ENCODE measurements at regions of chr3 and their contacts with region 1.

Region 1: GRCh38 chr3:49093853-49094767 is at the start of gene QRICH1:
- DNase-seq: peak; percentile 99
- H3K4me3 Mint-ChIP-seq: peak within 1 kb of the TSS; percentile 89
- H3K27ac Mint-ChIP-seq: peak within 1 kb of the TSS; percentile 98
- H3K4me1 Mint-ChIP-seq: peaks cover 6% of the 10 kb centered on the region
- H3K27me3 Mint-ChIP-seq: no peaks in the 10 kb centered on the region
- CTCF ChIP-seq: peak; percentile 21
- total RNA-seq, gene QRICH1: 96.1 and 97.2 TPM in 2 replicates

Region 2: DNA sequence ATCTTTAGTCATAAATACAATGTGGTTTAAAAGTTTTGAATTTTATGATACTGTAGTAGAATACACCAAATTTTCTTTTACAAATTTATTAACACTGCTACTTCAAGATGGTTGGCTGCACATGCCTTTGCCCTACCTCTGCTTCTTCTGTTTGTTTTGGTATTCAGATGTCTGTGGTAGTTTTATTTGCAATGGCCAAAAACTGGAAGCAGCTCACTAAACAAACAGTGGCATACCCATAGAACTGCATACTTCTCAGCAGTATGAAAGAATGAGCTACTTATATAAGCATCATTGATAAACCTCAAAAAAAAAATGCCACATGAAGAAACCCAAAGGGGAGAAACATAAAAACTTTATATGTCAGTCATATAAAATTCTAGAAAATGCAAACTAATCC is 156.0 kb before region 1 on chr3:
- CTCF ChIA-PET with region 1: no interaction called
- POLR2A ChIA-PET with region 1: no interaction called
- intact Hi-C with region 1: no loop called
- DNase-seq: no peak
- H3K4me3 Mint-ChIP-seq: no peak overlapping the region
- H3K27ac Mint-ChIP-seq: no peak overlapping the region
- H3K4me1 Mint-ChIP-seq: peaks cover 4% of the 10 kb centered on the region
- H3K27me3 Mint-ChIP-seq: no peaks in the 10 kb centered on the region
- CTCF ChIP-seq: no peak

Region 3: GRCh38 chr3:49021813-49022687 is 72.1 kb before region 1 on chr3 and contains the start of gene NDUFAF3:
- CTCF ChIA-PET with region 1: interaction called, 3 read pairs
- POLR2A ChIA-PET with region 1: interaction called, 128 read pairs
- intact Hi-C with region 1: loop called (anchors 5 kb)
- DNase-seq: peak; percentile 93
- H3K4me3 Mint-ChIP-seq: peak within 1 kb of the TSS; percentile 89
- H3K27ac Mint-ChIP-seq: peak within 1 kb of the TSS; percentile 95
- H3K4me1 Mint-ChIP-seq: peaks cover 13% of the 10 kb centered on the region
- H3K27me3 Mint-ChIP-seq: no peaks in the 10 kb centered on the region
- CTCF ChIP-seq: peak; percentile 95
- total RNA-seq, gene NDUFAF3: 77.8 and 86.5 TPM in 2 replicates

Region 4: DNA sequence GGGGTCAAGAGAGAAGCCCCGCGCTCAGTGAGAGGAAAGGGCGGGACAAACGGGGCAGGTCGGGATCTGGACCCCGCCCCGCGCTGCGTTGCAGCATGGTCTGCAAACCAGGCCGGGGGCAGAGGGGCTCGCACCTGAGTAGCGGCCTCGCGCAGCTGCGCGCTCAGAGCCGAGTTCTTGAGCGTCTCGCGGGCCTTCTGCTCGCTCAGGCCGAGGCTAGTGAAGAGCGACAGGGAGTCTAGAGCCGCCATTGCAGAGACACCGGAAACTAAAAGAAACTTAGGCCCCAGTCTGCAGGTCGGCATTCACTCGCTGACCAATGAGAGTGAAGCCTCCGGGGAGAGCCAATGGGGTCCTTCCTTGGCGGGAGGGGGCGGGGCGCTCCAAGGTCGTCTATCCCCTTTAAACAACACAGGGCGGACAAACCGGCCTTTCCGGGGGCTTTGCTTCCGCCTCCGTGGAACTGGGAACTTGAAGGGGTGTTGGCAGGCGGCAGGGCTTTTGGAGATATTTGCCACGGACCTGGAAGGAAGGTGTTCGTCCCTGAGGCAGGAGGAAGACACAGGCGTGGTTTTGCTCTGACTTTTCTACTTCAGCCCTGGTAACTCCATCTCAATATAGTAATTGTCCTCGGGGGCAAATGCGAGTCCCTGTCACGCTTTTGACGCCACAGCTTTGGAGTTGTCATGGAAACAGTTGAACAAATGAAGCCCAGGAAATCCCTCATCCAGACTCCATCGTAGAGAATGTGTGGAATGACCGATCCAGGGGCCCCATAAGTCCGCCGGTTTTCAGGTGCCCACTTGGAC is 10.6 kb after region 1 on chr3 and contains the start of gene QARS1:
- CTCF ChIA-PET with region 1: interaction called, 5 read pairs
- POLR2A ChIA-PET with region 1: interaction called, 63 read pairs
- intact Hi-C with region 1: no loop called
- DNase-seq: peak; percentile 93
- H3K4me3 Mint-ChIP-seq: peak within 1 kb of the TSS; percentile 98
- H3K27ac Mint-ChIP-seq: peak within 1 kb of the TSS; percentile 90
- H3K4me1 Mint-ChIP-seq: peaks cover 12% of the 10 kb centered on the region
- H3K27me3 Mint-ChIP-seq: no peaks in the 10 kb centered on the region
- CTCF ChIP-seq: no peak
- total RNA-seq, gene QARS1: 114 and 149 TPM in 2 replicates

Region 5: DNA sequence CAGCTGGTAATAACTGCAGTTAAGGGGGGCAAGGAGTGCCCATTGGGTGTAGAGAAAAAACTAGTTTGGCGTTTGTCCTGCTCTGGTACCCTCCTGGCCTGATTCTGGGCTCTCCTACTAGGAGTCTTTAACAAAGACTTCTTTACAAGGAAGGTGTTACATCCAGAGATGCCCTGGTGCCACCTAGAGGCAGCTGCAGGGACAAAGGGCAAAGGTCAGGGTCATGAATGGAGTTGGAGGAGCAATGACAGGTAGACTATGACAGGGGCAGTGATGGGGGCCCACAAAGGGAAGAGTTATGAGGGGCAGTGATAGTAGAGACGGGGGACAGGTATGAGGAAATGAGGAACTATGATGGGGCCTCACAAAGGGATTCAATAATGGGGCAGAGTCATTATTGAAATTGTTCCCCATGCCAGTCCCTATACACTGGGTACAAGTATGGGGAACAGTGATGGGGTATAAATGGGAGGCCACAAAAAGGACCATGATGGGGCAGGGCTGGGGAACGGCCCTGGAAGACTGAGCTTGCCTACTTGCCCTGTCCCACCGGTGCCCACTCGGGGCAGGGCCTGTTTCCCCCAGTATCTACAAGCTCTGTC is 64.1 kb after region 1 on chr3:
- CTCF ChIA-PET with region 1: interaction called, 4 read pairs
- POLR2A ChIA-PET with region 1: interaction called, 3 read pairs
- intact Hi-C with region 1: loop called (anchors 1 kb)
- DNase-seq: peak; percentile 68
- H3K4me3 Mint-ChIP-seq: no peak overlapping the region
- H3K27ac Mint-ChIP-seq: no peak overlapping the region
- H3K4me1 Mint-ChIP-seq: no peaks in the 10 kb centered on the region
- H3K27me3 Mint-ChIP-seq: no peaks in the 10 kb centered on the region
- CTCF ChIP-seq: peak; percentile 53

Region 6: DNA sequence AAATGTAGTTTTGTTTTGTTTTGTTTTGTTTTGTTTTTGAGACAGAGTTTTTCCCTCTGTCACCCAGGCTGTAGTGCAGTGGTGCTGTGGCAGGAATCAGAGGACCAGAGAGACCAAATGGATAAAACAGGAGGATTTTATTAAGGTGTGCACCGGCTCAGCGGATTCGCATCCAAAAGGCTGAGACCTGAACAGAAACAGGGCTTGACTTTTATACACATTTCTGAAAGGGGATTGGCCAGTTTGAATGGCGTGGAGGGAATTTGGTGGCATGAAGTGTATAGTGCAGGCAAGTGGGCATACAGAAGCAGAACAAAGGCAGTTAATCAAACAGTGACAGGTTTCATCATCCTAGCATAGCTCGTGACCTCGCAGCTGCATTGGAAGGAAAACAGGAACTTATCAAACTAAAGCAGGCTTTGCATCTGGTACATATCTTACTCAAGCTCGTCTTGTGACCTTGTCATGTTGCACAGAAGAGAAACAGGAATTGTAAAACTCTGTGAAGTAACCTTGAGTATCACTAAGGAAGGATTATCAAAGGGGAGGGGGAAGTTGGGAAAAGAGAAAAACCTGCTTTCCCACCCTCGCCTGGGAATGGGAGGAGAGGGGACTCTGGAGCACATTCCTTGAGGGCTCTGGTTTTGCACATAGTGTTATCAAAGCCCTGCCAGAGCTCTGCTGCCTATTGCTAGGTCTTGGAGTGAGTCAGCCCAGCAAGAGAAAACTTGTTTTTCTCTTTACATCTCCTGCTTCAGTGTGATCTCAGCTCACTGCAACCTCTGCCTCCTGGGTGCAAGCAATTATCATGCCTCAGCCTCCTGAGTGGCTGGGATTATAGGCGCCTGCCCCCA is 144.4 kb after region 1 on chr3:
- CTCF ChIA-PET with region 1: no interaction called
- POLR2A ChIA-PET with region 1: no interaction called
- intact Hi-C with region 1: no loop called
- DNase-seq: peak; percentile 73
- H3K4me3 Mint-ChIP-seq: peak overlapping the region; percentile 3
- H3K27ac Mint-ChIP-seq: peak overlapping the region; percentile 68
- H3K4me1 Mint-ChIP-seq: peaks cover 6% of the 10 kb centered on the region
- H3K27me3 Mint-ChIP-seq: no peaks in the 10 kb centered on the region
- CTCF ChIP-seq: no peak

Region 7: DNA sequence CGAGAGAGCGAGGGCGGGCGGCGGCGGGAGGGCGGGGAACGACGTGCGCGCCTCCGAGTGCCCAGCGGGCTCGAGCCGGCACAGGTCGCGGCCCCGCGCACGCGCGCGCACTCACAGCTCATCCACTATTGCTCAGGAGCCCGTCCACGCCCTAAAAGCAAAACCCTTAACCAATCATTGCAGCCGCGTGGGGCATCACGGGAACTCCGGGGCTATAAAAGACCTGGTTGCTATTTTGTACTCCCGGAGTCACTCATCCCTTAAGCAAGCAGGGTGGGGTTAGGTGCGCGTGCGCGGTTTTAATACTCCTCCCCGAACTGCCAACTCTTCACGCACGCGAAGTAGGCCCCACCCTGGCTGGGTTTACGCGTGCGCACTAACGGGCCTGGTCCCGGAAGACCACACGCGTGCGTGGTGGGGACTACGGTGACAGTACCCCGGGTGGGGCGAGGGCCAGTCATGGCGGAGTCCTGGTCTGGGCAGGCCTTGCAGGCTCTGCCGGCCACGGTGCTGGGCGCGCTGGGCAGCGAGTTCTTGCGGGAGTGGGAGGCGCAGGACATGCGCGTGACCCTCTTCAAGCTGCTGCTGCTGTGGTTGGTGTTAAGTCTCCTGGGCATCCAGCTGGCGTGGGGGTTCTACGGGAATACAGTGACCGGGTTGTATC is 318.0 kb after region 1 on chr3 and contains the starts of genes RHOA and TCTA:
- CTCF ChIA-PET with region 1: no interaction called
- POLR2A ChIA-PET with region 1: interaction called, 27 read pairs
- intact Hi-C with region 1: no loop called
- DNase-seq: peak; percentile 100
- H3K4me3 Mint-ChIP-seq: peak within 1 kb of the TSS; percentile 90
- H3K27ac Mint-ChIP-seq: peak within 1 kb of the TSS; percentile 94
- H3K4me1 Mint-ChIP-seq: peaks cover 32% of the 10 kb centered on the region
- H3K27me3 Mint-ChIP-seq: no peaks in the 10 kb centered on the region
- CTCF ChIP-seq: no peak
- total RNA-seq, gene RHOA: 273 and 298 TPM in 2 replicates
- total RNA-seq, gene TCTA: 14.0 and 17.2 TPM in 2 replicates